ENCODE measurements at regions of chr4 and their contacts with region 1.

Region 1: DNA sequence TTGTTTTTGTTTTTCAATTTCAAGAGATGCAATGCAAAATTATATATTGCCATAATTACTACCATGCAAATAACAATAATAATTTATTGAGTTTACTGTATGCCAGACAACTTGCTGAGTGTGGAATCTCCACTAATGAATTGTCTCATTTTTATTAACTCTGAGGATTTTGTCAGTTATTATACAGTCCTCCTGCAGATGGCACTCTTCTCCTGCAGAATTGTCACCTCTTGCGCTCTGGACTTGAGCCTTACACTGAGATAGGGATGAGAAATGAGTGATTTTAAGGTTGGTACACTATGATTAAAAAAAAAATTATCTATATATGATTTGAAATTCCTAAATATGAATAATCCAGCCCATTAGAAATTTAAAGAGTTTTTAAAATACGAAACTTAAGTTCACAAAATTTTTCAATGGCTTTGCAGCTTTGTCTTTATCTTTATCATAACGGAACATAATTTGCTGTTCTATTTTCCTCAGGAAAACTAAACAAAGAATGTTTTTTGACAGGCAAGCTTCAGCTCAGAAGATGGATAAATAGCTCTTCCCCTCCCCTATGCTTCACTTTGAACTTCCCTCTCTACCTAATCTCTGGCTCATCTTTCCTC is 12.7 kb upstream of the PAQR3 start:
- DNase-seq: peak; percentile 50
- H3K4me3 Mint-ChIP-seq: no peak overlapping the region
- H3K27ac Mint-ChIP-seq: no peak overlapping the region
- H3K4me1 Mint-ChIP-seq: no peaks in the 10 kb centered on the region
- H3K27me3 Mint-ChIP-seq: peaks cover 12% of the 10 kb centered on the region

Region 2: DNA sequence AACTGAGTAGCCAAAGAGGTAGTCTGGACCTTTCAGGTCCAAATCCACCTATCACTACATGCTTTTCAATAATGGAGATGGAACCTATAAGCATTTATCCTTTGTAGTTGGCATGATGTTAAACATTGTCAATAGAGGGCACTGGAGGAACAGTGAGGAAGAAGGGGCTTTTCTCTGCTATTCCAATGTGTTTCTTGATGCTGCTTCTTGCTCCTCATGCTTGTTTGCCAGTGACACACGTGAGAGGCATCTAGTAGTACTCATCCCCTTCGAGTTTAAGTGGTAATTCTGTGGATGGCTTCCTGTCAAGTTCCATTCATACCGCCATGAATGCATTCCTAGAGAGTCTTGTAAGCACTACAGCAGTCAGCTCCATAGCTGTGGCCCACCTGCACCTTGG is 289.9 kb after region 1 on chr4:
- CTCF ChIA-PET with region 1: no interaction called
- intact Hi-C with region 1: loop called (anchors 10 kb)
- DNase-seq: no peak
- H3K4me3 Mint-ChIP-seq: no peak overlapping the region
- H3K27ac Mint-ChIP-seq: no peak overlapping the region
- H3K4me1 Mint-ChIP-seq: no peaks in the 10 kb centered on the region
- H3K27me3 Mint-ChIP-seq: no peaks in the 10 kb centered on the region

Region 3: DNA sequence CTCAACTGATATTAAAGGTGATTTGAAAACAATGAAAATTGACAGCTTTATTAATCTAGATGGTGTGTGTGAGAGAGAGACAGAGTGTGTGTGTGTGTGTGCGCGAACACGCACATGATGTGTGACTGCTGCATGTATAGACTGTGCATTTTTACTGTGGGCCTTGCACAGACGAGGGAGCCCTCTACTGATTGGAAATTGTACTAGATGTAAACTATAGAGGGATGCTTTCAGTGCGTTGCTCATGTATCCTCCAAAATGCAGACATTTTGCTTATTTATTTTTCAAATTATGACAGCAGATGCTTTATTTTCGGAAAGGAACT is 624.4 kb after region 1 on chr4:
- CTCF ChIA-PET with region 1: interaction called, 11 read pairs
- intact Hi-C with region 1: loop called (anchors 1 kb)
- DNase-seq: peak; percentile 25
- H3K4me3 Mint-ChIP-seq: no peak overlapping the region
- H3K27ac Mint-ChIP-seq: no peak overlapping the region
- H3K4me1 Mint-ChIP-seq: no peaks in the 10 kb centered on the region
- H3K27me3 Mint-ChIP-seq: no peaks in the 10 kb centered on the region

Region 4: GRCh38 chr4:79882806-79883205 is 930.8 kb after region 1 on chr4:
- CTCF ChIA-PET with region 1: no interaction called
- intact Hi-C with region 1: no loop called
- DNase-seq: no peak
- H3K4me3 Mint-ChIP-seq: no peak overlapping the region
- H3K27ac Mint-ChIP-seq: no peak overlapping the region
- H3K4me1 Mint-ChIP-seq: no peaks in the 10 kb centered on the region
- H3K27me3 Mint-ChIP-seq: no peaks in the 10 kb centered on the region

Region 5: GRCh38 chr4:79917246-79917645 is 965.3 kb after region 1 on chr4:
- CTCF ChIA-PET with region 1: no interaction called
- intact Hi-C with region 1: loop called (anchors 5 kb)
- DNase-seq: peak; percentile 67
- H3K4me3 Mint-ChIP-seq: no peak overlapping the region
- H3K27ac Mint-ChIP-seq: no peak overlapping the region
- H3K4me1 Mint-ChIP-seq: peaks cover 2% of the 10 kb centered on the region
- H3K27me3 Mint-ChIP-seq: no peaks in the 10 kb centered on the region

Region 6: DNA sequence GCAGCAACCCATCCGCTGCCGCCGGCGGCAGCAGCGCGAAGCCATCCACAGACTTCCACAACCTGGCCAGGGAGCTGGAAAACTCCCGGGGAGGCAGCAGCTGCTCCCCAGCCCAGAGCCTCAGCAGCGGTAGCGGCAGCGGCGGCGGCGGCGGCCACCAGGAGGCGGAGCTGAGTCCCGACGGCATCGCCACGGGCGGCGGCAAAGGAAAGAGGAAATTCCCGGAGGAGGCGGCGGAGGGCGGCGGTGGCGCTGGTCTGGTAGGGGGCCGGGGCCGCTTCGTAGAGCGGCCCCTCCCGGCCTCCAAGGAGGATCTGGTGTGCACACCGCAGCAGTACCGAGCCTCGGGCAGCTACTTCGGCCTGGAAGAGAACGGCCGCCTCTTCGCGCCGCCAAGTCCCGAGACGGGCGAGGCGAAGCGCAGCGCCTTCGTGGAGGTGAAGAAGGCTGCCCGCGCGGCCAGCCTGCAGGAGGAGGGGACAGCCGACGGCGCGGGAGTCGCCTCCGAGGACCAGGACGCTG is 1250.3 kb after region 1 on chr4:
- CTCF ChIA-PET with region 1: no interaction called
- intact Hi-C with region 1: loop called (anchors 5 kb)
- DNase-seq: peak; percentile 79
- H3K4me3 Mint-ChIP-seq: peak overlapping the region; percentile 70
- H3K27ac Mint-ChIP-seq: no peak overlapping the region
- H3K4me1 Mint-ChIP-seq: peaks cover 20% of the 10 kb centered on the region
- H3K27me3 Mint-ChIP-seq: peaks cover 20% of the 10 kb centered on the region

Region 7: DNA sequence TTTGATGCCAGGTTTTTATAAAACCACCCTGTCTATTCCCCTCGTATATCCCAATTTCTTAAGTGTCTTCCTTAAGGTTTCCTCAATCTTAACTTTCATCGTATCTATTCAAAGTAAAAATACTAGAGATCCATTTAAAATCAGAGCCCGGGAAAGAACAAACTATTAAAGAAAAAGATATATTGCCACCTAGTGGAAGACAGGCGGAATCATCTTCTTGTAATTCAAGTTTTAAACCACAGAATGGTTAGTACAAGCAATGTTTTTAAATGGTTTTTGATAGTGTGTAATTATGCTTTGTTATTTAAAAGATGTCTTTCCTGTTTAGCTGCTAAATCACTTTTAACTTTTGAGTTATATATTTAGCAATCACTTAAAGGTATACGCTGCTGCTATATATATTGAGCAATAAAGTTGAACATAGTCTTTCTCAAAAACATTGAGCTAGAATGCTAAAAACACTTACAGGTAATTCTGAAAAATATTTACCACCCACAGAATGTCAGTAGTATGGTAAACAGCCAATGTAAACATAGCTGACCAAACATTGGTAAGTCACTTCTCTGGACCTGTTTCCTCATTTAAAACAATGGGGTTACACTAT is 1263.6 kb after region 1 on chr4:
- CTCF ChIA-PET with region 1: interaction called, 4 read pairs
- intact Hi-C with region 1: loop called (anchors 1 kb)
- DNase-seq: no peak
- H3K4me3 Mint-ChIP-seq: no peak overlapping the region
- H3K27ac Mint-ChIP-seq: no peak overlapping the region
- H3K4me1 Mint-ChIP-seq: peaks cover 1% of the 10 kb centered on the region
- H3K27me3 Mint-ChIP-seq: peaks cover 9% of the 10 kb centered on the region

Region 8: DNA sequence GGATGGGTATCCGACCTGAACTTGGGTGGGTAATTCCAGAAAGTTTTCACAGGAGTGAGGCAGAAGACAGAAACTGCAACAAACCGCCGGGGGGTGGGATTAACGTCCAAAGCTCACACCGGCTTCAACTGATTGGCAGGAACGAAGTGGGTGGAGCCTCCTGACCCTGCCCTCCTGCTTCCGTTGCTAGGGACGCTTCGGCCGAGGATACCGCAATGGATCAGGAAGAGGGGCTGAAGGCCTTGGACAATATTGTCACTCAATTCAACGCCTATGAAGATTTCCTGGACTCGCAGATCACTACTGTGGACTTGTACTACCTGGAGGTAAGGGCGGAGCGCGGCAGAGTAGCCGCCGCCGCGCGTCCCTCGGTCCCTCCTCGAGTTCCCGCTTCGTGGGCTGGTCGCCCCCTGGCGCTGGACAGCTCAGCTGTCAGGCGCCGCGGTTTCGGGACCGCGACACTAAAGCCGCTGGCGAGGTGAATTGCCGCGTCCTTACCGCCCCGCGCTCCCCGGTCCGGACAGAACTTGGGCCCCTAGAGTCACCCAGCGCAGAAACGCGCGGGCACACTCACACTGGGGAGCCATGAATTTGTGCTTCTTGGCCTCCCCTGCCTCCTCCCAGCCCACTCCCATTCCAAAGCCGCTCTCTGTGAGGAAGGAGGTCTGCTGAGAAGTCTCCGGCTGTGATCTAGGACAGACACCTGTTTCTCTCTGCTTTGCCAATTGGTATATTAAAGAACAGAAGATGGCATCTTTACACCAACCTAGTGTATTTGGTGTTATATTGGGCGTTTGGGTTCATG is 1383.8 kb after region 1 on chr4 and contains the start of gene CFAP299:
- CTCF ChIA-PET with region 1: no interaction called
- intact Hi-C with region 1: loop called (anchors 5 kb)
- DNase-seq: peak; percentile 84
- H3K4me3 Mint-ChIP-seq: peak within 1 kb of the TSS; percentile 77
- H3K27ac Mint-ChIP-seq: no peak within 1 kb of the TSS
- H3K4me1 Mint-ChIP-seq: peaks cover 5% of the 10 kb centered on the region
- H3K27me3 Mint-ChIP-seq: peaks cover 9% of the 10 kb centered on the region
- total RNA-seq, gene CFAP299: not detected

Measured in activated naive CD4-positive, alpha-beta T cell treated with anti-CD3 and anti-CD28 coated beads for 36 hours (primary cell).